A549 (cell line): ENCODE measurements at regions of chr16 and their contacts with region 1.

Region 1: DNA sequence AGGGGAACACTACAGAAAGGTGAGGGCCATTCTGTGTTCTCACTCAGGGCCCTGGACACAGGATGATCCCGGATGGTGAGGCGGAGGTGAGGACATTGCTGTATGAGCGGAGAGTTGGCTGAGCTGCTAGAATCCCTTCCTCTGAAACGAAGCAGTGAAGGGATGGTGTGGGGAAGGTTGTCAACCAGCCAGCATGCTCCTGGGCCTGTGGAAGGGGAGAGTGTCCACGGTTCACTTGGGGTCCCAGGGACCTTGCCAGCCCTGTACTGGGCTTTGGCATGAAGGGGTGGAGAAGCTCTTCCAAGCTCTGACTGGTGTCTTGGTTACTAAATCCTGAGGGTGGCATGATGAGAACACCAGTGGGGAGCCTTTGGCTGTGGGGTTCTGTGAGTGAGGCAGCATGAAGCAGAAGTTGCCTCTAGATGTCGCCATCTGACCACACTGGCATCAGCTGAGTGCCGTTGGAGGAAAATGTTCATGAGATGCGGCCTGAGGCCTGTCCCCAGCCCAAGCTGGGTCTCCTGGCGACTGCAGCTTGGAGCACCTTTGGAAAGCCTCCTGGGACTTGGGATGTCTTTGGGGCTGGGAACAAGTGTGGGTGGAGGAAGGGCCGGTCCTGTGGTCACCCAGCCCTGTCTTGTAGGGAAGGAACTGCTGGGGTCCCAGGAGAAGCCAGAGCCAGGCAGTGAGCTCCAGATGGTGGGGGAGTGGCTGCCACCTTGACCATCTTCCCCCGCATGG is 14.8 kb downstream of the PDP2 start:
- DNase-seq: peak; percentile 58 to 78
- ATAC-seq: peak; percentile 89 to 96
- H3K4me3 ChIP-seq: no peak overlapping the region
- H3K27ac ChIP-seq: peak overlapping the region in 1 of 2 experiments; percentile 17; a peak in 3 of 6 replicates
- H3K4me1 ChIP-seq: peaks cover 14% of the 10 kb centered on the region
- CTCF ChIP-seq: peak; percentile 87
- EP300 ChIP-seq: no peak
- POLR2A ChIP-seq: no peak
- RAD21 ChIP-seq: peak; percentile 92 to 98

Region 2: DNA sequence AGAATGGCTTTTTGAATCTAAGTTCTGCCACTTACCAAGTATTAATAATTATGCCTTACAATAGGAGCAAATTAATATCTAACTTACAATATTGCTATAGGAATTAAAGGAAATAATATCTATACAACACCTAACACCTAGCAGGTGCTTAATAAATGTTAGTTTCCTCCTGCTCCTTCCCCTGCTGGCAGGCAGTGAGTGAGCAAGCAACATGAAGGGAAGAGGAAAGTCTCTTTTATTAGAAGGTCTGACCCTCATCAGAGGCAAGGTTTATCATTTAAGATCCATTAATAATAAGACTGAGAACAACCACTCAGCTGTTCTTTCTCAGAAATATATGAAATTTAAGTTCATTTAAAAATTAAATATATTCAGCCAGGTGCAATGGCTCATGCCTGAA is 137.0 kb before region 1 on chr16:
- CTCF ChIA-PET with region 1: no interaction called
- POLR2A ChIA-PET with region 1: no interaction called
- DNase-seq: no peak
- ATAC-seq: no peak
- H3K4me3 ChIP-seq: no peak overlapping the region
- H3K27ac ChIP-seq: no peak overlapping the region
- H3K4me1 ChIP-seq: no peaks in the 10 kb centered on the region
- CTCF ChIP-seq: no peak
- EP300 ChIP-seq: no peak
- POLR2A ChIP-seq: no peak
- RAD21 ChIP-seq: no peak

Region 3: DNA sequence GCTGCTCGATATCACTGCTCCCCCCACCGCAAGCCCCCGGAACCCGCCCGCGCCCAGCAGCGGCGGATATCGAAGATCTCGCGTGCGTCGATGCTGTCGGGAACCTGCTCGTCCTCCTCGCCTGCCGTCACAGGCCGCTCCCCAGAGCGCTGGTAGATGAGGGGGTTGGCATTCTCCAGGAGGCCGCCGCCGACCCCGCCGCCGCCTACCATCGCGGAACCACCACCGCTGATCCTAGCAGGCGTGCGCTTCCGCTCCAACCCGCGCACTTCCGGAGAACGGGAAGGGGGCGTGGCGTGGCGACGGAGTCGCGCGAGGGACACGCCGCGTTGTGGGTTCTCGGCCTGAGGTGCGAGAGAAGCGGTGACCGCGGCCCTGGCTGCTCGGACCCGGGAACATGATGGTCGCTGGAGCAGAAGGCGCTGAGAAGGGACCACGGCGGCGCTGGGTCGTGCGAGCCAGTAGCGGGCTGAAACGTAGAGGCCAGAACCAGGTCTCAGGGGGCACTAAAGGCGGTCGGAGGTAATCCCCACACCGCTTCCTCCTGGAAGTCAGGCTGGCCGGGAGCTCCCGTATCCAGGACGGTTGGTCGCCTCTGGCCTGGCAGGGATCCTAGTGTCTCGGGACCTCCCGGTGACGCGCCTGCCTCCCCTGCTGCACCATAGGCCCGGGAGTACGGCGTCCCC is 39.2 kb after region 1 on chr16 and contains the start of gene CIAO2B:
- CTCF ChIA-PET with region 1: interaction called, 837 read pairs
- POLR2A ChIA-PET with region 1: no interaction called
- DNase-seq: peak; percentile 88 to 91
- ATAC-seq: peak; percentile 79 to 91
- H3K4me3 ChIP-seq: peak within 1 kb of the TSS; percentile 81
- H3K27ac ChIP-seq: peak within 1 kb of the TSS; percentile 94 to 99
- H3K4me1 ChIP-seq: peaks cover 28% of the 10 kb centered on the region
- CTCF ChIP-seq: no peak
- EP300 ChIP-seq: no peak
- POLR2A ChIP-seq: peak; percentile 94
- RAD21 ChIP-seq: no peak
- polyA plus RNA-seq, gene CIAO2B: 140 and 168 TPM in 2 replicates

Region 4: DNA sequence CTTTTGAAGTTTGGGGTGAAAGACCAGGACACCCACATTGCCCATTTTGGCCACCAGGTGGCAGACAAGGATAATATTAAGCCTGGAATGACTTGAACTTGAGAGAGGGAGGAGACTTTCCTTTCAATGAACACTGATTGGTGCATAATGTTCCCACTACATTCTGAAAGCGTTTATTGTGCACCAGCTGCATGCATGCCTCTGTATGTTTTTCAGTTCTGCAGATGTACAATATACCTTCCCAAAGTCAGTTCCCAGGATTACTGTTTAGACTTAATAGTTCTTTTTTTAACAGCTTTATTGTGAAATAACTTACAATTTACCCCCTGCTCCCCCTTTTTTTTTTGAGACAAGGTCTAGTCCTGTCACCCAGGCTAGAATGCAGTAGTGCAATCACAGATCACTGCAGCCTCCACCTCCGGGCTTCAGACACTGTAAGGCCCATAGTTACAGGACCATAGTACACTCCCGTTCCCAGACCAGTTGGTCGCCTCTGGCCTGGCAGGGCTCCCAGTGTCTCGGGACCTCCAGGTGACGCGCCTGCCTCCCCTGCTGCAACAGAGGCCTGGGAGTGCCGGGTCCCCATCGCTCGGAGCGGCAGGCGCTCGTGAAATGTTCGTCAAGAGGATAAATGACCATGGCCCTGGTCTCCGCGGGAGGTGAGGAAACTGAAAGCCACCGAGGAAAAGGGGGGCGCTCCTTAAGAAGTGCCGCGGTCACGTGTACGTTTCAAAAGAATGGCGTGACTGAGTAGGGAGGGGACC is 52.4 kb after region 1 on chr16:
- CTCF ChIA-PET with region 1: interaction called, 26 read pairs
- POLR2A ChIA-PET with region 1: no interaction called
- DNase-seq: peak; percentile 83 to 94
- ATAC-seq: peak; percentile 82 to 93
- H3K4me3 ChIP-seq: peak overlapping the region; percentile 22; the same call in 2 of the 3 replicates
- H3K27ac ChIP-seq: 0 out of 6 replicates have a peak overlapping the region, but pooled peaks of 1 of the 2 experiments have one; percentile 21
- H3K4me1 ChIP-seq: 0 out of 3 replicates have a peak, but pooled peaks cover 4% of the 10 kb centered on the region
- CTCF ChIP-seq: peak; percentile 81
- EP300 ChIP-seq: no peak
- POLR2A ChIP-seq: no peak
- RAD21 ChIP-seq: peak; percentile 68 to 79

Region 5: GRCh38 chr16:66961065-66961744 is 66.1 kb after region 1 on chr16 and contains the start of gene CES3:
- CTCF ChIA-PET with region 1: interaction called, 45 read pairs
- POLR2A ChIA-PET with region 1: no interaction called
- DNase-seq: peak; percentile 80 to 85
- ATAC-seq: peak; percentile 99 to 100
- H3K4me3 ChIP-seq: peak within 1 kb of the TSS; percentile 33
- H3K27ac ChIP-seq: peak within 1 kb of the TSS; percentile 49 to 82; a peak in 4 of 6 replicates
- H3K4me1 ChIP-seq: no peaks in the 10 kb centered on the region
- CTCF ChIP-seq: peak; percentile 85
- EP300 ChIP-seq: no peak
- POLR2A ChIP-seq: no peak
- RAD21 ChIP-seq: peak in 1 of 2 experiments; percentile 18; a peak in 1 of 5 replicates
- polyA plus RNA-seq, gene CES3: 3.8 and 4.1 TPM in 2 replicates